Naive thymus-derived CD8-positive, alpha-beta T cell (primary cell): ENCODE measurements at regions of chr6 and their contacts with region 1.

Region 1: GRCh38 chr6:157021344-157021992 is 244.3 kb downstream of the ARID1B start:
- DNase-seq: peak; percentile 83 to 95 (median 90)
- ATAC-seq: peak; percentile 79 to 82
- H3K4me3 Mint-ChIP-seq: peak overlapping the region; percentile 91 to 98 (median 96)
- H3K27ac Mint-ChIP-seq: peak overlapping the region; percentile 85 to 100 (median 99)
- H3K4me1 Mint-ChIP-seq: peaks cover 15 to 73% (median 51%) of the 10 kb centered on the region in 4 donors
- H3K27me3 Mint-ChIP-seq: no peaks in the 10 kb centered on the region

Region 2: DNA sequence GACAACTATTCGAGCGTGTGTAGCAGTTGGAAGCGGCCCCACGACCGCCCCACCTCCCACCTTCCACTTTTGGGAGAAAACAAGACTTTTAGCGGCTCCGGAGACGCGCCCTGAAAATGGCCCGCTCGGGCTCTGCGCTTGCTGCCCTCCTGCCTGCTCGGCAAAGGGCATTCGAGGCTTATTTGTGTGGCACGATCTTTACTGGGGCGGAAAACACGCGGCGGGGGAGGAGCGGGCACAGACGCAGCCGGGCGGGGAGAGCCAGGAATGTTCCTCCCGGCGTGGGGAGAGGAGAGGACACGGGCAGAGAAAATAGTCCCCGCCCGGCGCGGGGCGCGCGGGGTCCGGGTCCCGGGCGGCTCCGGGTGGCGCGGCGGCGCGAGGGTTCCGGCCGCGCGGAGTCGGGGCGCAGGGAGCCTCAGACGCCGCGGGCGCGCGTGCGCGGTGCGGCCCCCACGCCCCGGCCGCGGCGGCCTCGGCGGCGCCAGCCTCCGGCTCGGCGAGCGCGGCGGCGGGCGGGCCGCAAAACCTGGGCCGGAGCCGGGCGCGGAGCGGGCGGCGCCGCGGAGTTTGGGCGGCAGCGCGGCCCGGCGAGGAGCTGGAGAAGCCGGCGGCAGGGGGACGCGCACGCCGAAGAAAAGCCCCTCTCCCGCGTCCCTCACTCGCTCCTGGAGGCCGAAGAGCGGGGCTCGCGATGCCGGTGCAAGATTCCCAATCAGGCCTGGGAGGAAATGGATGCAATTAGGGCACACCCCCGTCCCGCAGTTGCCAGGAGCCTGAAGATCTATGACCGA is 334.3 kb before region 1 on chr6:
- POLR2A ChIA-PET with region 1: interaction called, 13 read pairs
- DNase-seq: peak; percentile 64 to 87 (median 83)
- ATAC-seq: peak; percentile 83 to 85
- H3K4me3 Mint-ChIP-seq: peak overlapping the region; percentile 76 to 97 (median 91)
- H3K27ac Mint-ChIP-seq: peak overlapping the region; percentile 90 to 99 (median 96)
- H3K4me1 Mint-ChIP-seq: peaks cover 8 to 51% (median 17%) of the 10 kb centered on the region in 4 donors
- H3K27me3 Mint-ChIP-seq: no peaks in the 10 kb centered on the region

Region 3: DNA sequence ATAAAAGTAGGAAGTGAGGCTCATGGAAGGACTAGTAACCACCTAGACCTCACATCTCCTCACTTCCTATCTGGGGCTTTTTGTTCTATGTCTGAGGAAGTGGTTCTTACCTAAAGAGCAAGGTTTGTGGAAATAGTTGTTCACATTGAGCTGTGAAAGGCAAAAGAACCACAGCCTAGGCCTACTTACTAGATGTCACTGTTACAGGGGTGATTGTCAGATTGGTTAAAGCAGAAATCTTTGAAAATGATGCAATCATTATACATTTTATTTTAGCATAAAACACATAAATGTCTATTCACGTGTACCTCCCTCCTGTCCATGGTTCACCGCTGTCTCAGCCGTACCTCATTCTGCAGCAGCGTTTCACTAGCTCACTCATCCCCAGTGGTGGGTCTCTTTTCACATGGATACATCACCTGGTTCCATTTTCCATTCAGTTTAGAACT is 33.1 kb after region 1 on chr6:
- POLR2A ChIA-PET with region 1: interaction called, 10 read pairs
- DNase-seq: peak in 8 of 10 donors; percentile 9 to 84 (median 62)
- ATAC-seq: peak; percentile 96 to 98
- H3K4me3 Mint-ChIP-seq: peak overlapping the region in 9 of 10 donors; percentile 4 to 70 (median 43)
- H3K27ac Mint-ChIP-seq: peak overlapping the region; percentile 51 to 92 (median 90)
- H3K4me1 Mint-ChIP-seq: peaks cover 24 to 54% (median 42%) of the 10 kb centered on the region in 4 donors
- H3K27me3 Mint-ChIP-seq: no peaks in the 10 kb centered on the region